Left cardiac atrium (tissue), 4 donors: ENCODE measurements at regions of chr10 and their contacts with region 1.

Region 1: GRCh38 chr10:98028168-98028770 is 2.2 kb downstream of the CRTAC1 start:
- DNase-seq: peak; percentile 68
- ATAC-seq: peak in 1 of 2 donors; percentile 48

Region 2: DNA sequence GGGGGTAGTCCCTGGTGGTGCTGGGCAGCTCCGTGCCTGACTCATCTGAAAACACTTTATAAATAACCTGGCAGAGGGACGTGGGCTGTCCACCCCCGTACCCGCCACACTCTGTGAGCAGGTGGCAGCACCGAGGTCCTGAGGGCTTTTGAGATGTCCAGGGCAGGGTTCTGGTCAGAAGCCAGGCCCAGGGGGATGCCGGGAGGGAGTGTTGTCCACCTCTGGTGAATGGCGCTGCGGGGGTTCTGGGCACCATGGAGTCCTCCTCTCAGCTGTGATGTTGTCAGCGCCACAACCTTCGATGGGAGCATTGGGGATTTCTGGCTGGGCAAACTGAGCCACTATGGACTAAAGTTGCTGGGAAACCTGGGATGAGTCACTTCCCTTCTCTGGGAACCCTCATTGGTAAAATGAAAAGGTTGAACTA is 206.0 kb before region 1 on chr10:
- intact Hi-C with region 1: no loop called
- DNase-seq: peak; percentile 60
- ATAC-seq: peak; percentile 68 to 88

Region 3: DNA sequence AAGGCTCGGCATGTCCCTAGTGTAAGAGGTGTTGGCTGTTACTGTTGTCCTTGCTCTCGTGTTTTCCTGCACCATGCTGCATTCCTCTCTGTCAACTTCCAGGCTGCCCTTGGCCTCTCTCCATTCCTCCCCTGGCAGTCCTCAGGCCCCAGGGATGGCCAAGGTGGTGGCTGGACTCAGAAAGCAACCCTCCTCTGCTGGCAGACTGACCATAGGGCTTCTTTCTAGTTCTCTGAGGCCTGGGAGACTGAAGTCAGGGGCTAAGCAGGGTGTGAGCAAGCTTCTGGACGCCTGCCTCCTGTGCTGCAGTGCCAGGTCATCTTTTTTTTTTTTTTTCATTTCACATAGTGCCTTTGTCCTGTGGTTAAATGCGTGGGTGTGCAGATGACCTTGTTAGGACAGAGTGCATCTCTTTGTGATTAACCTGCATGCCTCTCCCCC is 106.7 kb before region 1 on chr10:
- intact Hi-C with region 1: loop called (anchors 5 kb)
- DNase-seq: no peak
- ATAC-seq: peak; percentile 71 to 84